ENCODE measurements at regions of chr5 and their contacts with region 1.

Region 1: GRCh38 chr5:151447174-151448037 is at the start of gene SLC36A1:
- DNase-seq: peak; percentile 96 to 97 (median 96)
- ATAC-seq: peak; percentile 99
- H3K4me3 ChIP-seq: peak within 1 kb of the TSS; percentile 39
- H3K4me1 ChIP-seq: peaks cover 20% of the 10 kb centered on the region
- CTCF ChIP-seq: peak; percentile 93
- total RNA-seq, gene SLC36A1: 38.1 to 105 (median 55.2) TPM

Region 2: GRCh38 chr5:150960791-150961396 is 486.5 kb before region 1 on chr5:
- intact Hi-C with region 1: no loop called
- DNase-seq: no peak
- ATAC-seq: no peak
- H3K4me3 ChIP-seq: no peak overlapping the region
- H3K4me1 ChIP-seq: no peaks in the 10 kb centered on the region
- CTCF ChIP-seq: no peak

Region 3: GRCh38 chr5:151499501-151500035 is 52.2 kb after region 1 on chr5:
- intact Hi-C with region 1: loop called (anchors 2 to 10 kb)
- DNase-seq: no peak
- ATAC-seq: peak; percentile 13
- H3K4me3 ChIP-seq: no peak overlapping the region
- H3K4me1 ChIP-seq: no peaks in the 10 kb centered on the region
- CTCF ChIP-seq: no peak

Region 4: GRCh38 chr5:151509231-151509630 is 61.8 kb after region 1 on chr5:
- intact Hi-C with region 1: loop called in 1 of 2 experiments (anchors 10 kb)
- DNase-seq: no peak
- ATAC-seq: no peak
- H3K4me3 ChIP-seq: no peak overlapping the region
- H3K4me1 ChIP-seq: no peaks in the 10 kb centered on the region
- CTCF ChIP-seq: no peak

Region 5: GRCh38 chr5:151659001-151659754 is 211.8 kb after region 1 on chr5:
- intact Hi-C with region 1: loop called in 1 of 2 experiments (anchors 10 kb)
- DNase-seq: peak; percentile 58 to 85 (median 80)
- ATAC-seq: peak; percentile 91
- H3K4me3 ChIP-seq: no peak overlapping the region
- H3K4me1 ChIP-seq: peaks cover 3% of the 10 kb centered on the region
- CTCF ChIP-seq: peak; percentile 67

Region 6: DNA sequence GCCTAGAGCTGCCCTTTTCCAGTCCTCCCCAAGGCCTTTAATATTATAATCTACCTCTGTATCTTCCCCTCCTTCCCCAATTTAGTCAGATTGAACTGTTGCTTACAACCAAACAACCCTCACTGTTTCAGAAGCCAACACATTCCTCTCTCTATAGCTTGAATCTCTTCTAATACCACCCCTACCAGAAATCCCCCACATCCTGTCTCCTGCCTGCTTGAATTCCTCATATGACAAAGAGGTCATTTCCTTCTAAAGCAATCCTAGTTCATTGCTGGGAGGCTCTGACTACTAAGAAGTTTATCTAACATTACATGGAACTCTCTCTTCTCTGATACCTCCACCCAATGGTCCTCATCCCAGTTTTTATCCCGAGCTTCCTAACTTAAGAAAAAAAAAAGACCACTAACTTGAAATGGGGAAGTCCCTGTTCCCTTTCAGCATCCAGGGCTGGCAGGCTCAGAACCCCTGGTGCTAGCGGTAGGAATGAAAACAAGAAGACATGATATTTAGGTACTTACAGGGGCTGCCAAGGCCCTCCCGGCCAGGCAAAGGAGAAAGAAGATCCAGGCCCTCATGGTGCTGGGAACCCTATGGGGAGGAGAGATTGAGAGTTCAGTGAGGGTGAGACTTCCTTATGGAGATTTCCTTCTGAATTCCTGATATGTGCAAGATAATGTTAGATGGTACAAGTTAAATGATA is 228.4 kb after region 1 on chr5:
- intact Hi-C with region 1: no loop called
- DNase-seq: no peak
- ATAC-seq: no peak
- H3K4me3 ChIP-seq: no peak overlapping the region
- H3K4me1 ChIP-seq: peaks cover 3% of the 10 kb centered on the region
- CTCF ChIP-seq: no peak